ENCODE measurements at regions of chr11 and their contacts with region 1.

Region 1: GRCh38 chr11:30346068-30346688 is 23.3 kb downstream of the ARL14EP start:
- DNase-seq: no peak

Region 2: GRCh38 chr11:30277176-30277575 is 69.0 kb before region 1 on chr11:
- intact Hi-C with region 1: no loop called
- DNase-seq: no peak

Region 3: DNA sequence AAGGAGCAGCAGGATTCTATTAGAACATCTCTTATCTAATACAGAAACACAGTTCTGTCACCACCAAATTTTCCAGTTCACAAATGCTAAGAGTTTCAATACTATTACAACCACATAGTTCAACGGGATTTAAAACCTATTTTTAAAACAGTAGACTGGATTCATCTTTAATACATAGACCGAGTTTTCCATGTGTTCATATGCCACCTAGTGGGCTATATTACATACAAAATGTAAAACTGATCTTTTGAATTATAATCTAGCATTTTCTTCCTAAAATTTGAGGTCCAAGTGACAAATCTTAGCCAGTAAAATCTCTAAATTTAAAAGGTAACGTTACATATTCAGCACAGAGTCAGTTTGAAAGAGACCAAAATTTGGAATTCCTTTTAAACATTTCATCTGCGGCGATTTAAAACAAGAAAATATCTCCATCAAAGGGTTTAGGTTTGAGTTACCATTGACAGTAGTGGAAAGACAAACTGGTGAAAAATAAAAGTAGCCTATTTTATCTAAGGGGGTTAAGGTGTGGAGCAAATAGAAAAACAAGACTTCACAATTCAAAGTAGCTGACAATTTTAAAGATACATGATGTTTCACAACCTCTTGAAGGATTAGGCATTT is 509.3 kb after region 1 on chr11:
- intact Hi-C with region 1: loop called (anchors 2 kb)
- DNase-seq: no peak

Region 4: DNA sequence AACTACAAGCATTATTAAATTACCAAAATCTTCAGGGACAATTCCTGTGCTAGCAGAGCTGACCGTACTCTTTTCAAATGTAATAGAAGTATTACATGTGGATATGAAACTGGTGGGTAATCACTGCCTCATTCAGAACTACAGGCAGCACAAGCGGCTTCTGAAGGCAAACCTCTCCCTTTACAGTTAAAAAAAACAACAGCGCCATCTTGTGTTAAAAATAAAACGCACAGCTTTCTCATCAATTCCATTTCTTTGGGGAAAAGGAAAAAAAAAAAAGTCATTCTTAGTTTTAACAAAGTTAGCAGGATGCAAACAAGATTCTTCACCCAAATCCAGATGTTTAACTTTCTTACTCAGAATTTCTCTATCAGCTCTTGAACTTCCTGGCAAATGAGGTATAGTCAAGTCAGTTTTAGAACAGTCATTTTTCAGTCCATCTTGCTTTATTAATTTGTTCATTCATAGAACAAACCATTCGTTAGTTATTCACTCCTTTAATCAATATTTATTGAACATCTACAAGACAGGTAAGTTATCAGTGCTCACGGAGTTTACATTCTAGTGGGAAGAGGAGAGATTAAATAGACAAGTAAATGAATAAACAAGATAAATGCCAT is 571.8 kb after region 1 on chr11:
- intact Hi-C with region 1: loop called (anchors 5 kb)
- DNase-seq: no peak